Ascending aorta (tissue), 2 donors: ENCODE measurements at regions of chr17 and their contacts with region 1.

Region 1: GRCh38 chr17:81977211-81978027 is at the start of gene ASPSCR1:
- DNase-seq: peak; percentile 54 to 93
- H3K4me3 ChIP-seq: peak within 1 kb of the TSS; percentile 74 to 84
- H3K27ac ChIP-seq: peak within 1 kb of the TSS; percentile 79 to 95
- H3K4me1 ChIP-seq: peaks cover 4 to 11% of the 10 kb centered on the region in 2 donors
- H3K27me3 ChIP-seq: no peaks in the 10 kb centered on the region
- CTCF ChIP-seq: peak in 1 of 3 experiments; percentile 18
- total RNA-seq, gene ASPSCR1: 45.1 TPM

Region 2: GRCh38 chr17:81934850-81935708 is 42.3 kb before region 1 on chr17:
- intact Hi-C with region 1: no loop called
- DNase-seq: no peak
- H3K4me3 ChIP-seq: no peak overlapping the region
- H3K27ac ChIP-seq: no peak overlapping the region
- H3K4me1 ChIP-seq: peaks cover 8 to 10% of the 10 kb centered on the region in 2 donors
- H3K27me3 ChIP-seq: no peaks in the 10 kb centered on the region
- CTCF ChIP-seq: no peak

Region 3: DNA sequence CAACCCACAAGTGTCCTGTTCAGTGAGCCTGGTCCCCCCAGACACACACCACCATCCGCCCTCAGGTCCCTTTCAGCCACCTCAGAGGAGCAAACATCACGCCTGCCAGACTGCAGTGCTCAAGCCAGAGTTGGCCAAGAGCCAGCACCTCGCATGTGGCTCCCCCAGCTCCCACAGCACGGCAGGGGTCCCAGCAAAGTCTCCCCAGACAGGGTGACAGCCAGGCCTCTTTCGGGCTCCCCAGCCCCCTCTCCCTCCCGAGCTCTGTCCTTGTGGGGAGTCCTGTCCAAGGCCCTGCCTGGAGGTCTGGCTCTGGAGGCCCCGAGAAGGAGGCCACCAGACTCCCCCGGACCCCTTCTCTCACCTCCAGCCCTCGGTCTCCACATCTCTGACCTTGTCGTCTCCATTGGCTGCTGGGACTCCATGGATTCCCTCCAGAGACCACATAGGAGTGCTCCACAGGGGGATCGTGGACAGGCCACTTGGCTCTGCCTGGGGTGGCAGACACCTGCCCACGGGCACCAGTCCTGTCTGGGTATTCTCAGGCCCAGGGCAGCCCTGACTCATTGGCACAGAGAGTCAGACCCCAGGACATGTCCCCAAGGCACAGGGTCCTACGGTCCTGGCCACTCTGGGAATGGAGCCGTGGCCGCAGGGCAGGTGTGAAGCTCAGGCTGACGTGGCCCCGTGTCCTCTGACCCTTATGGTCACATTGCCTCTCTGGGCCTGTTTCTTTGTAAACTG is 28.6 kb before region 1 on chr17:
- intact Hi-C with region 1: no loop called
- DNase-seq: no peak
- H3K4me3 ChIP-seq: no peak overlapping the region
- H3K27ac ChIP-seq: no peak overlapping the region
- H3K4me1 ChIP-seq: no peaks in the 10 kb centered on the region
- H3K27me3 ChIP-seq: peaks cover 3% of the 10 kb centered on the region
- CTCF ChIP-seq: no peak

Region 4: DNA sequence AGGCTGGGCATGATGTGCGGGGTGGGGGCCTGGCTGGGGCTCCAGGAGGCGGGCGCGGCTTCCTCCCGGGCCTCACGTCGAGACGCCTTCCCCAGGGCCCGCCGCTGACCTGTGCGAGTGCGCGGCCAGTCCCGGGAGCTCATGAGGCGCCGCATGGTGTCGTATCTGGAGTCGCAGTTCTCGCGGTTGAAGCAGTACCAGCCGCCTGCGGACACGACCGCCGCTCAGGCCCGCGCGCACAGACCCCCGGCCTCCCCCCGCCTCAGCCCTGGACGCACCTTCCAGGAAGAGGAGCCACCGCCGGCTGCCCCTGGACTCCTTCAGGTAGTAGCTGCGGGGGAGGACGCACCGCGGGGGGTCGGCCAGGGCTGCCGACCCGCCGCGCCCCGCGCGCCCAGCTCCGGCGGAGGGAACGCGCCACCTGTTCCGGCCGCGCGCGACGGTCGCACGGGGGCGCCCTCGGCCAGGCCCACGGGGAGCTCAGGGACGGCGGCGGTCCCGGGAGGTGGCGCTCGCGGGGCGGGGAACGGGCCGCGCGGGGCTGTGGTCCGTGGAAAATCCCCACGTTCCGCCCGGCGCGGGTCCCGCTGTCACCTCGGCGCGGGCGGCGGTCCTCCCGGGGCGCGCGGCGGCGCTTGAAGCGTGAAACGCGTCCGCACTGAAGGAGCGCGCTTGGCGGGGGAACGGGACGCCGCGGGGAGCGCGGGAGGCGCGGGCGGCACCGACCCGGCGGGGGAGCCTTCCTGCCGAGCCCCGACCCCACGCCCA is 17.9 kb before region 1 on chr17:
- intact Hi-C with region 1: no loop called
- DNase-seq: peak in 1 of 2 donors; percentile 81
- H3K4me3 ChIP-seq: peak overlapping the region; percentile 50 to 64
- H3K27ac ChIP-seq: no peak overlapping the region
- H3K4me1 ChIP-seq: peaks cover 10 to 11% of the 10 kb centered on the region in 2 donors
- H3K27me3 ChIP-seq: peaks cover 29% of the 10 kb centered on the region
- CTCF ChIP-seq: peak; percentile 10 to 99 (median 47)

Region 5: DNA sequence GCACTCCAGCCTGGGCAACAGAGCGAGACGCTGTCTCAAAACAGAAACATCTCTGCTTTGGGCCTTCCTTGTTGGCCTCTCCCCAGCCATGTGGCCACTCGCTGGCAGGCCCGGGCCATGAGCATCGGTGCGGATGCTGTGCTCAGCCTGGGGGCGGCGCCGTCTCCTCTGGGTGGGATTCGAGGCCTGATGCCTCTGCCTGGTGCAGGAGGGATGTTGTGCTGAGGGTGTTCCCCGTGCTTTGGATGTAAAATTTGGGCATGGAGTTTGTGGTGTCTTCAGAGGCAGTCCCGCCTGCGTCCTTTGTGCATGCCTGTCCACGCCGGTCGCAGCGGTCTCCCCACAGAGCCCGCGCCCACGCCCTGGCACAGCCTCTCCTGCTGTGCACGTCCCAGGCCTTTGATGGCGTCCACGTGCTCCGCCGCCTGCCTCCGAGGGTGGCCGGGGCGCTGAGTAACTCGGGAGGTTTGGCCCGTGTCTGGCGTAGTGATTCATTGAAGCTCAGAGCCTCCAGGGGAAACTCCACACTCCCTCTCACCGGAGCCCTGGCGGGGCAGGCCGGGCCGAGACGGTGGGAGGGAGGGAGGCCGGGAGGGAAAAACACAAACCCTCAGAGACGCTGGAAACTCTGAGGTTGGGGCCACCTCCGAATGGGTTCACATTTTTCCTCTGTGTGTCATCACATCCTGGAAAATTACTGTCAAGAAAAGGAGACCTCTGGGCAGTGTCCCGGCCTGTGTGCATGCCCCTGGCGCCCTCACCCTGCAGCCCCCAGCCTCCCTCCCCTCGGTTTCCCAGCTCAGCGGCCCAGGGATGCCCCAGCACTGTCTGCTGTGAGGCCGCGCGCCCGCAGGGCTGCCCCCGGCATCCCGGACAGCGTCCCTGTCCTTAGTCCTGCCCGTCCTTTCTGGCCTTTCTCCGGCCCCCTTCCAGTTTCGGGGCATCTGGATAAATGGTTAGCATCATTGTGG is 26.3 kb after region 1 on chr17:
- intact Hi-C with region 1: loop called (anchors 1 kb)
- DNase-seq: peak; percentile 75 to 97
- H3K4me3 ChIP-seq: peak overlapping the region in 1 of 2 donors; percentile 42
- H3K27ac ChIP-seq: peak overlapping the region; percentile 76 to 85
- H3K4me1 ChIP-seq: peaks cover 19 to 46% of the 10 kb centered on the region in 2 donors
- H3K27me3 ChIP-seq: no peaks in the 10 kb centered on the region
- CTCF ChIP-seq: no peak